ENCODE measurements at regions of chr7 and their contacts with region 1.

Region 1: DNA sequence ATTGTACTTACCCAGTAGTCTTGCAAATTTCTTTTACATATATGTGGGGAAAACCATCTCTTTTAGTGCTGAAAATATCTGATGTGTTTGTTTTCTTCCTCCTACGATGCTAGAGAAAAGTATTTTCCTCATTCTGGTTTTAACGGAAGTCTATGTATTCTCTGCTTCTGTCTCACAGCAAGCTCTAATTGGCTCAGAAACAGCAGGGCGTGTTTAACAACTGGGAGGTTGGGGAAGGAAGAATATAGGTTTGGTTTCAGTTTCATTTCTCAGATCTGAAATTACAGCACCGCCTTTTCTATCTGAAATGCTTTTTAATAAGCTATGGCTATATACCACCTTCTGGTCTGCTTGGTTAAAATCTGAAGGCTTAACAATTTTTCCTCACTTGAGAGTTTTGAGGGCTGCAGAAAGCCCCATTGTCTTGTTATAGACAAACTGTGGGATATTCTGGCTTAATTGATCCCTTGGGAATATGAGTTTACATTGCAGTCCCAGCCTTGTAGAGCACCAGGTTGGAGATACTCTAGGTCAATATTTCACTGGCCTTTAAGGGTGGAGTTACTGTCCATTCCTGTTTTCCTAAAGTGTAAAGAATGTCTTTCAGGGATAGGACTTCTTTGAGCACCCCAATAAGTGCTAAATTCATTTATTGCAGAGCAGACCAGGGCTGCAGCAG is at the start of gene SAMD9:
- DNase-seq: peak; percentile 18 to 91 (median 60)
- ATAC-seq: peak; percentile 99
- H3K4me3 ChIP-seq: peak within 1 kb of the TSS; percentile 61 to 64
- H3K4me3 Mint-ChIP-seq: peak within 1 kb of the TSS; percentile 80
- H3K27ac ChIP-seq: peak within 1 kb of the TSS; percentile 58 to 81
- H3K27ac Mint-ChIP-seq: peak within 1 kb of the TSS; percentile 84
- H3K4me1 ChIP-seq: peaks cover 28% of the 10 kb centered on the region
- H3K4me1 Mint-ChIP-seq: peaks cover 47% of the 10 kb centered on the region
- H3K27me3 ChIP-seq: no peaks in the 10 kb centered on the region
- H3K27me3 Mint-ChIP-seq: no peaks in the 10 kb centered on the region
- CTCF ChIP-seq: no peak
- total RNA-seq, gene SAMD9: 23.5 to 23.8 TPM

Region 2: DNA sequence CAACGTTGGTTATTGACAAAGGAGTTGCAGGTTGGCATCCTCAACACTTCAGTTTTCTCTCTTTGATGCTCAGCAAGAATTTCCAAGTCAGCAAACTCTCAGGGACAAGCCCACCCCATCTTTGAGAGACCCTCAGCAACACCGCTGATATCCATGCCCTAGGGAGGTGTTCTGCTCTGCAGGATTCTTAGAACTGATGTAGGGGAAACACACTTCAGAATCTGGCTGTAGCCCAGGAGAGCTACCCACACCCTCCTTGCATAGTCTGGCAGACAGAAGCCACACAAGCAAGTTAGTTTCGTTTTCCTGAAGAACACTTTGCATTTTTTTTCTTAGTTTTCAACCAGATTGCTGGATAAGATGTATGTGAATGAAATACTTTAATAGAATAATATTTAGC is 29.4 kb after region 1 on chr7:
- CTCF ChIA-PET with region 1: interaction called, 3 read pairs
- POLR2A ChIA-PET with region 1: interaction called, 8 read pairs
- intact Hi-C with region 1: loop called in 1 of 2 experiments (anchors 1 kb)
- DNase-seq: peak in 8 of 9 experiments; percentile 4 to 72 (median 44)
- ATAC-seq: peak; percentile 82
- H3K4me3 ChIP-seq: peak overlapping the region; percentile 61 to 68
- H3K4me3 Mint-ChIP-seq: peak overlapping the region; percentile 94
- H3K27ac ChIP-seq: peak overlapping the region; percentile 44 to 79
- H3K27ac Mint-ChIP-seq: peak overlapping the region; percentile 90
- H3K4me1 ChIP-seq: peaks cover 23% of the 10 kb centered on the region
- H3K4me1 Mint-ChIP-seq: peaks cover 33% of the 10 kb centered on the region
- H3K27me3 ChIP-seq: no peaks in the 10 kb centered on the region
- H3K27me3 Mint-ChIP-seq: no peaks in the 10 kb centered on the region
- CTCF ChIP-seq: no peak

Region 3: DNA sequence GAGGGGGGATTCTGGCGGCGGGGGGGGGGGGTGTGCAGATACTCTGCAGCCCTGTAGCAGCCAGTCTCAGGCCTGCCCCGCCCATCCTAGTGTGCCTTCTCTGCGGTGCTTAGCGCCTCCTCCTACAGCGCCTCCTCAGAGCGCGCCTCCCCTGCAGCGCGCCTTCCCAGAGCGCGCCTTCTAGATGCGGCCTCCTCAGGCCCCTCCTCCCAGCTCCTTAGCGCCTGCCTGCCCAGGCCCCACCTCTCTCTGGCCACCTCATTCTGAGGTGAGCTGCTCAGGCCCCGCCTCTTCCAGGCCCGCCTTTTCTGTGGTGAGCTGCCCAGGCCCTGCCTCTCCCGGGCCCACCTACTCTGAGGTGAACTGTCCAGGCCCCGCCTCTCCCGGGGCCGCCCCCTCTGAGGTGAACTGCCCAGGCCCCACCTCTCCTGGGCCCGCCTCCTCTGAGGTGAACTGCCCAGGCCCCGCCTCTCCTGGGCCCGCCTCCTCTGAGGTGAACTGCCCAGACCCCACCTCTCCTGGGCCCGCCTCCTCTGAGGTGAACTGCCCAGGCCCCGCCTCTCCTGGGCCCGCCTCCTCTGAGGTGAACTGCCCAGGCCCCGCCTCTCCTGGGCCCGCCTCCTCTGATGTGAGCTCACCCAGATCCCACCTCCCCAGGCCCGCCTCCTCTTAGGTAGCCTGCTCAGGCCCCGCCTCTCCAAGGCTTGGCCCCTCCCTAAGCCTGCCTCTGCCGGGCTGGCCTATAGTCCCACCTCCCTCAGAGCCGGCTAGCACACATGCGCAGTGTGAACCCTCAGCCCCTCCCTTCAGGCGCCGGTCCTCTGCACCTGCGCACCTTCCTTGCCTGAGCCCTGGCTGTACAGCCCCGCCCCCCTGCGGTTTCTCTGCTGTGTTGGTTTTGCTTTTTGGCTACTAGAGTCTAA is 1540.0 kb after region 1 on chr7:
- CTCF ChIA-PET with region 1: no interaction called
- POLR2A ChIA-PET with region 1: no interaction called
- intact Hi-C with region 1: loop called in 1 of 2 experiments (anchors 5 kb)
- DNase-seq: peak; percentile 85 to 97 (median 93)
- ATAC-seq: peak; percentile 81
- H3K4me3 ChIP-seq: peak overlapping the region in 1 of 2 experiments; percentile 51
- H3K4me3 Mint-ChIP-seq: peak overlapping the region; percentile 89
- H3K27ac ChIP-seq: no peak overlapping the region
- H3K27ac Mint-ChIP-seq: no peak overlapping the region
- H3K4me1 ChIP-seq: peaks cover 29% of the 10 kb centered on the region
- H3K4me1 Mint-ChIP-seq: peaks cover 28% of the 10 kb centered on the region
- H3K27me3 ChIP-seq: peaks cover 18 to 19% of the 10 kb centered on the region in 2 experiments
- H3K27me3 Mint-ChIP-seq: peaks cover 18% of the 10 kb centered on the region
- CTCF ChIP-seq: no peak

Measured in CD8-positive, alpha-beta T cell (primary cell).